WTC11 (cell line): ENCODE measurements at regions of chr20 and their contacts with region 1.

Region 1: DNA sequence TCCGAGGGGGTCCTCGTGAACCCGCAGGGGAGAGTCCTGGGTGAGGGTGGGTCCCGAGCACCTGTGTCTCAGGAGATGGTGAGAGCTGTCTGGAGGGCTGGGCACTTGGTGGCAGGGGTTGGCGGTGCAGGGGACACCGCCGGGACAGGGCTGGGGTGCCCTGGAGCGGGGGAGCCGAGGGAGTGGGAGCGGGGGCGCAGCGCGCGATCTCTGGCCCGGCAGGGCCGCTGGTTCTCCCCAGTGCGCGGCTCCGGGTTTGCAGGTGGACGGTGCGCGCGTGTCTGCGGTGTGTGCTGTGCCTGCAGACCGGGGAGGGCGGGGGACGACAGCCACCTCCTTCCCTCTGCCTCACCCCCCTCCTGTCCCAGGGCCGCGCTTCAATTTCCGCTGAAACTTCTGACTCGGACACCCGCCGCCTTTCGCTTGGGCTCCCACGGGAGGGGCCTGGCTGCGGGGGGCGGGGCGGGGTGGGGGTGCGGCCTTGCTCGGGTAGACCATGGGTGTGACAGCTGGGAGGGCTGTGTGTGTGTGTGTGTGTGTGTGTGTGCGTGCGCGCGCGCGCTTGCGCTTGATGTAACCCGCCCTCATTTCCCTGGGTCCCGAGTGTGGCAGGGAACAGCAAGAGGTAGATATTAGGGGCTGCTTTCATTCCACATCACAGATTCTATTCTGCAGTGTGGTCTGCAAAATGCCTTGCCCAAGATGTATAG is 1.2 kb downstream of the TRIB3 start:
- DNase-seq: peak; percentile 50
- ATAC-seq: peak; percentile 49
- H3K4me3 Mint-ChIP-seq: peak overlapping the region; percentile 66
- H3K27ac Mint-ChIP-seq: no peak overlapping the region
- H3K4me1 Mint-ChIP-seq: no peaks in the 10 kb centered on the region
- H3K27me3 Mint-ChIP-seq: peaks cover 25% of the 10 kb centered on the region
- CTCF ChIP-seq: no peak

Region 2: DNA sequence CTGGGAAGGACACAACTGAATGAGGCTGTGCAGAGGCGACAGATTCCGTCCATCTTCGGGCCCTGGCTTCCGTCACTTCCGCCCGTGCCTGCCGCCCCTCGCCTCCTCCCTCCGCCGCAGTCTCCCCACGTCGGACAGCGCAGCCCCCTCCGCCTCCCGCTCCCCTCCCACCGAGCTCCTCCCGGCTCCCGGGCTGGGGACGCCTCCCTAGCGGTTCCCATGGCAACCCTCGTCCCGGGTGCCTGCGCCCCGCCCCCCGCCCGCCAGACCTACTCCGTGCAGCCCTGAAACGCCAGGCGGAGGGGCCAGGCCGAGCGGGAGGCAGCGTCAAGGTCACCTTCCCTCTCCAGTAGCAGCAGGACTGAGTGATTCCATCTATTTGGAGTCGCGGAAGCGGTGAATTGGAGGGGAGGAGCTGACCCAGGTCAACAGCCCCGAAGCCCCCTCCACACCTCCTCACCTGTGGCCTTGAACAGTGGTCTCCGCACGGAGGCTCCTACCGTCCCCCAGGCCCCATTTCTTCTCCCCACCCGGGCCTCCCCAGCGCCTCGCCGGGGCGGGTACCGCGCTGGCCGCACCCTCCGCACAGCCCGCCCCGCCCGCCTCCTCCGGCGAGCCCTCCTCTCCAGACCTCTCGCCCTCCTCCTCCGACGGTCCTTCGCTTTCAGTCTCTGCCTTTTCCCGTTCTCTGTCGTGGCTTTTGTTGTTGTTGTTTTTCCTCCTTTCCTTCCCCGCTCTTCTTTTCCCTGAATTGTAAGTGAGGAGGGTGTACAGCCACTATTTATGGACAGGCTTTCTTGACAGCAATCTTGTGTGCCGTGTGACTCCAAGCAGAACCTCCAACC is 33.9 kb before region 1 on chr20:
- CTCF ChIA-PET with region 1: interaction called, 14 read pairs
- POLR2A ChIA-PET with region 1: interaction called, 4 read pairs
- DNase-seq: peak; percentile 97
- ATAC-seq: peak; percentile 80
- H3K4me3 Mint-ChIP-seq: peak overlapping the region; percentile 89
- H3K27ac Mint-ChIP-seq: peak overlapping the region; percentile 93
- H3K4me1 Mint-ChIP-seq: peaks cover 17% of the 10 kb centered on the region
- H3K27me3 Mint-ChIP-seq: peaks cover 15% of the 10 kb centered on the region
- CTCF ChIP-seq: no peak

Region 3: GRCh38 chr20:354298-355064 is 27.3 kb before region 1 on chr20:
- CTCF ChIA-PET with region 1: interaction called, 18 read pairs
- POLR2A ChIA-PET with region 1: no interaction called
- DNase-seq: peak; percentile 84
- ATAC-seq: peak; percentile 92
- H3K4me3 Mint-ChIP-seq: no peak overlapping the region
- H3K27ac Mint-ChIP-seq: no peak overlapping the region
- H3K4me1 Mint-ChIP-seq: peaks cover 6% of the 10 kb centered on the region; the same call in 1 of the 2 replicates
- H3K27me3 Mint-ChIP-seq: no peaks in the 10 kb centered on the region; the same call in 1 of the 2 replicates
- CTCF ChIP-seq: peak; percentile 95

Region 4: GRCh38 chr20:362271-363254 is 19.2 kb before region 1 on chr20:
- CTCF ChIA-PET with region 1: interaction called, 30 read pairs
- POLR2A ChIA-PET with region 1: interaction called, 5 read pairs
- DNase-seq: peak; percentile 57
- ATAC-seq: peak; percentile 71
- H3K4me3 Mint-ChIP-seq: no peak overlapping the region
- H3K27ac Mint-ChIP-seq: no peak overlapping the region
- H3K4me1 Mint-ChIP-seq: peaks cover 23% of the 10 kb centered on the region
- H3K27me3 Mint-ChIP-seq: peaks cover 3% of the 10 kb centered on the region; the same call in 1 of the 2 replicates
- CTCF ChIP-seq: peak; percentile 28; the same call in 1 of the 2 replicates

Region 5: DNA sequence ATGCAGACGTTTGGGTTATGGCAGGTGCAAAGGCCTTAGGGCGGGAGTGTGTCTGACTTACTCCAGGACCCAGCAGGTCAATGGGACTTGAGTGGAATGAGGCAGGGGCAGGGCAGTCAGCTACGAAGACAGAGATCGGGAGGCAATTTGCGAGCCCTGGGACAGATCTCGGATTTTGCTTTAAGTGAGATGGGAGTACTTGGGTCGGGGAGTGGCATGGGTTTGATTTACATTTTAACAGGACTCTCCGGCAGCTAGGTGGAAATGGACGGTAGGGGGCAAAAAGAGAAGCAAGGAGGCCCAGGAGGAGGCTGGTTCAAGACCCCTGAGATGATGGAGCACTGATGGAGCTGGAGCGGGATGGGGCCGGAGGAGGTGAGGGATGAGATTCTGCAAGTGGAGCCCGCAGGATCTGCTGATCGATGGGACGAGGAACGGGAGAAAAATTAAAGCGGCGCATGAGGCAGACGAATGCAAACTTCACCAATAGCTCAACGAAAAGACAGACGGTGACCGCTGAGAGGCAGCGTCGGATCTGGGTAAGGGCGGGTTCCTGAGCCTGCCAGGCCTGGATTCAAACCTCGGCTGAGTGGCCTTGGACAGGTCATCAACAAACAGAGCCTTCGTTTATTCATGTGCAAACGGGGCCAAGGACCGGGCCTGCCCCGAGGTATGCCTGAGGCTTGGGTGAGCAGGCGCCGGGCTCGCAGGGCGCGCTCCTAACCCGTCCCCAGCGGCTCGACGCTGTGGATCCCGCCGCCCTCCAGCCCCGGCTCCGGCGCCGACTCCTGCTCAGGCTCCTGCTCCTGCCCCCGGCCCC is 25.6 kb after region 1 on chr20:
- CTCF ChIA-PET with region 1: interaction called, 4 read pairs
- POLR2A ChIA-PET with region 1: interaction called, 10 read pairs
- DNase-seq: peak; percentile 89
- ATAC-seq: peak; percentile 93
- H3K4me3 Mint-ChIP-seq: peak overlapping the region; percentile 86
- H3K27ac Mint-ChIP-seq: peak overlapping the region; percentile 97
- H3K4me1 Mint-ChIP-seq: peaks cover 21% of the 10 kb centered on the region
- H3K27me3 Mint-ChIP-seq: peaks cover 8% of the 10 kb centered on the region; the same call in 1 of the 2 replicates
- CTCF ChIP-seq: no peak